ENCODE measurements at regions of chr3 and their contacts with region 1.

Region 1: GRCh38 chr3:184777336-184778004 is 34.5 kb upstream of the VPS8 start:
- DNase-seq: peak; percentile 96
- H3K4me3 ChIP-seq: no peak overlapping the region
- H3K27ac ChIP-seq: no peak overlapping the region
- H3K4me1 ChIP-seq: no peaks in the 10 kb centered on the region
- H3K27me3 ChIP-seq: no peaks in the 10 kb centered on the region
- CTCF ChIP-seq: peak; percentile 66 to 97 (median 90)
- POLR2A ChIP-seq: no peak

Region 2: GRCh38 chr3:184561061-184561912 is 216.2 kb before region 1 on chr3 and contains the start of gene EPHB3:
- intact Hi-C with region 1: loop called (anchors 1 kb)
- DNase-seq: peak; percentile 100
- H3K4me3 ChIP-seq: peak within 1 kb of the TSS; percentile 87 to 90
- H3K27ac ChIP-seq: peak within 1 kb of the TSS; percentile 83 to 87
- H3K4me1 ChIP-seq: peaks cover 27% of the 10 kb centered on the region
- H3K27me3 ChIP-seq: no peaks in the 10 kb centered on the region
- CTCF ChIP-seq: peak; percentile 98 to 100 (median 100)
- POLR2A ChIP-seq: peak; percentile 100
- total RNA-seq, gene EPHB3: 11.9 to 25.2 TPM

Region 3: GRCh38 chr3:184711493-184712247 is 65.8 kb before region 1 on chr3 and contains the start of gene MAGEF1:
- intact Hi-C with region 1: loop called (anchors 10 kb)
- DNase-seq: peak; percentile 65
- H3K4me3 ChIP-seq: peak within 1 kb of the TSS; percentile 81 to 89
- H3K27ac ChIP-seq: peak within 1 kb of the TSS; percentile 93 to 96
- H3K4me1 ChIP-seq: no peaks in the 10 kb centered on the region
- H3K27me3 ChIP-seq: no peaks in the 10 kb centered on the region
- CTCF ChIP-seq: peak in 1 of 4 experiments; percentile 27
- POLR2A ChIP-seq: peak; percentile 70
- total RNA-seq, gene MAGEF1: 50.2 to 71.6 TPM

Region 4: GRCh38 chr3:184734903-184735701 is 42.4 kb before region 1 on chr3:
- intact Hi-C with region 1: loop called (anchors 5 kb)
- DNase-seq: no peak
- H3K4me3 ChIP-seq: no peak overlapping the region
- H3K27ac ChIP-seq: no peak overlapping the region
- H3K4me1 ChIP-seq: no peaks in the 10 kb centered on the region
- H3K27me3 ChIP-seq: no peaks in the 10 kb centered on the region
- CTCF ChIP-seq: no peak
- POLR2A ChIP-seq: no peak

Measured in prostate gland (tissue), 2 donors.